IMR-90 (cell line): ENCODE measurements at regions of chr4 and their contacts with region 1.

Region 1: DNA sequence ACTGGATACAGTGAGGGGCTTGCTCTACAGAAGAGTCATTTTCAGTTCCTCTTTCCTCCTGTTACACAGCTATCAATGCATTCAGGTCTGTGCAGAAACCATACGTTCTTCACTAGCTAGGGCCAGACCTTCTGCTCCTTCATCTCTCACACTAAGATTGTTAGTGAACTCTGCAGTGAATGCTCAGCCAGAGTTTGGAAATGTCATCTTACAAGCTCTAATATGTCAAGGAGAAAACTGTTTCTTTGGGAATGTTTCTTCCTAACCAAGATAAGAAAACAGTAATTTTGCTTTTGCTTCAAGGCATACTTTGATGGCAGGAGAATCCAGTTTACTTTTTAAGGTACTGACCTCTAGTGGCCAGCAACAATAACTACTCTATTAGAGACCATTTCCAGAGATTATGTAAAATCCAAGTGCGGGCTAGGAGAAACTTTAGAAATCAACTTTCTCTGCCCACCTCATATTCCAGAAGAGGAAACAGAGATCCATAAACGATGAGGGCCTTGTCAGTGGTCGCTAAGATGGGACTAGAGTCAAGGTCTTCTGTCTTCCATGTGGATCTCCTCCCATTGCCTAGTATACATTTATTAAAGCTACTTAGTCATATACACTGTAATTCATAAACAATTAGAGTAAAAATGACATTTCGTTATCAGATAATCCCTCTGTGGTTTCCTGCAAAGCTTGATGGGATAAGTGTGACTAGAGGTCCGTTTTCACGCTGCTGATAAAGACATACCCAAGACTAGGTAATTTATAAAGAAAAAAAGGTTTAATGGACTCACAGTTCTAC is 12.1 kb upstream of the CC2D2A start:
- DNase-seq: peak; percentile 81
- ATAC-seq: peak; percentile 88
- H3K4me3 ChIP-seq: no peak overlapping the region
- H3K27ac ChIP-seq: peak overlapping the region; percentile 85; the same call in 1 of the 2 replicates
- H3K4me1 ChIP-seq: peaks cover 23% of the 10 kb centered on the region
- H3K27me3 ChIP-seq: peaks cover 4% of the 10 kb centered on the region
- CTCF ChIP-seq: peak; percentile 83
- POLR2A ChIP-seq: no peak
- RAD21 ChIP-seq: peak; percentile 84

Region 2: DNA sequence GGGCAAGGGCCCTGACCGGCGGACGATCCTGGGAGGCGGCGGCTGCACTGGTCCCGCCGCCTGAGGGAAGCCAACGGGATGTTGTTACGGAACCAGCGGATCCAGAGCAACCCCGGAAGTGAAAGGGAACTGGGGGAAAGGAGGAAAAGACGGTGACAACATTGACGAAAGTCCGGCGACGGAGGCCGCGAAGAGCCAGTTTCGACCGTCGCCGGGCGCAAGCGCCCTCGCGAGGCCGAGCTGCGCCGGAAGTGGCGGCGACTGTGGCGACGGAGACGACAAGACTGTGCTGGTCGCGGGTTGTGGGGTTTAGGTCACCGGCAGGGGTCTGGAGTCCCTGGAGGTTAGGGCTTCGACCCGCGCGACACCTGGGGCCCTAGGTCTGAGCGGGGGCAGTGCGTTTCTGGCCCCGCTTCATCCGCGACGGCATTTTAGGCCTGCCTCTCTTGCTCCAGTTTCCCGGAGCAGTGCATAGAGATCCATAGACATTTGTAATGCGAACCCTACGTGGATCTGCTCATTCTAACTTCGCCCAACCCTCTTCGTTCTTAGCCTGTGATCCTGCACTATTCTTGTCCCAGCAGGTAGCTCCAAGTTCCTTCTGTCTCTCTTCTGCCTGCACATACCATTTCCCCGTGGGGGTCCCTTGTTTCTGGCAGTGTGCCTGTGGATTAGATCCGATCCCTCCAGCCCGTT is 1829.8 kb before region 1 on chr4 and contains the start of gene BOD1L1:
- CTCF ChIA-PET with region 1: no interaction called
- POLR2A ChIA-PET with region 1: no interaction called
- dilution Hi-C with region 1: no loop called
- in situ Hi-C with region 1: loop called (anchors 25 kb)
- intact Hi-C with region 1: no loop called
- DNase-seq: peak; percentile 89
- ATAC-seq: peak; percentile 94
- H3K4me3 ChIP-seq: peak within 1 kb of the TSS; percentile 94
- H3K27ac ChIP-seq: peak within 1 kb of the TSS; percentile 90
- H3K4me1 ChIP-seq: peaks cover 5% of the 10 kb centered on the region
- H3K27me3 ChIP-seq: no peaks in the 10 kb centered on the region
- CTCF ChIP-seq: peak; percentile 53
- POLR2A ChIP-seq: peak; percentile 89
- RAD21 ChIP-seq: peak; percentile 6; the same call in 1 of the 2 replicates
- total RNA-seq, gene BOD1L1: 26.9 and 34.4 TPM in 2 replicates

Region 3: DNA sequence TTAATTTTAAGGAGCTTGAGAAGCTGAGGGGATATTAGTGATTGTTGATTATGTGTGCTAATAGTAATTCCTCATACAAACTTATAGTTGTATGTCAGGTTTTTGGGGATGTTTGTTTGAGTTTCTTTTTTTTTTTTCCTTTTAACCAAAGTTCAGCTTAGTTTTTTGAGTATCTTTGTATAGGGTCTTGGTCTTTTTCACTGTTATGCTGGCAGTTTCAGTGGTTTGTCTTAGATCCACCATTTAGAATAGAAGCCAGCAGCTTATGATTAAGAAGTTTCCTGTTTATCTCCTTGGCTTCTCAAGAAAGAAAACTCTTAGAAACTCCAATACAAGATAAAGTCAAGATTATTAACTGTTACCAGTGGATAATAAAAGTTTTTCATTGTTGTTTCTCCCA is 439.2 kb before region 1 on chr4:
- CTCF ChIA-PET with region 1: no interaction called
- POLR2A ChIA-PET with region 1: no interaction called
- dilution Hi-C with region 1: no loop called
- in situ Hi-C with region 1: no loop called
- intact Hi-C with region 1: loop called (anchors 5 kb)
- DNase-seq: no peak
- ATAC-seq: no peak
- H3K4me3 ChIP-seq: no peak overlapping the region
- H3K27ac ChIP-seq: no peak overlapping the region
- H3K4me1 ChIP-seq: peaks cover 2% of the 10 kb centered on the region
- H3K27me3 ChIP-seq: no peaks in the 10 kb centered on the region
- CTCF ChIP-seq: no peak
- POLR2A ChIP-seq: no peak
- RAD21 ChIP-seq: no peak

Region 4: GRCh38 chr4:15238720-15239119 is 218.9 kb before region 1 on chr4:
- CTCF ChIA-PET with region 1: interaction called, 14 read pairs
- POLR2A ChIA-PET with region 1: no interaction called
- dilution Hi-C with region 1: no loop called
- in situ Hi-C with region 1: loop called (anchors 5 kb)
- intact Hi-C with region 1: loop called (anchors 1 kb)
- DNase-seq: peak; percentile 63
- ATAC-seq: peak; percentile 62
- H3K4me3 ChIP-seq: no peak overlapping the region
- H3K27ac ChIP-seq: no peak overlapping the region
- H3K4me1 ChIP-seq: peaks cover 15% of the 10 kb centered on the region
- H3K27me3 ChIP-seq: no peaks in the 10 kb centered on the region
- CTCF ChIP-seq: peak; percentile 89
- POLR2A ChIP-seq: no peak
- RAD21 ChIP-seq: peak; percentile 93

Region 5: DNA sequence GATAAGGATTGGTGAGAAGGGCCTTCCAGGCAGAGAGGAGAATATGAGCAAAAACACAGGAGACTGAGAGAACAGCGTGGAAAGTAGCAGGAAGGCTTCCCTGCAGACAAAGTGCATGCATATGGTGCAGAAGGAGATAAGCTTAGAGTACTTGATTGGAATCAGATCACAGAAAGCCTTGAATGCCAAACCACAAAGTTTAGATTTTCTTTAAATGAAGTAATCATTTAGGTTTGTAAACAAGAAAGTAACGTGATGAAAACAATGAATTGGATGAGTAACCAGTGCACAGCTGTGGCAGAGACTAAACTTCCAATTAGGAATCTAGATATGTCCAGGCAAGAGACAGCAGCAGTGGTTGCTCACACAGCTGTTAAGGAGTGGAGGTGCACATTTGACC is 113.6 kb before region 1 on chr4:
- CTCF ChIA-PET with region 1: no interaction called
- POLR2A ChIA-PET with region 1: no interaction called
- dilution Hi-C with region 1: no loop called
- in situ Hi-C with region 1: loop called (anchors 10 kb)
- intact Hi-C with region 1: loop called (anchors 2 kb)
- DNase-seq: peak; percentile 96
- ATAC-seq: peak; percentile 80
- H3K4me3 ChIP-seq: no peak overlapping the region
- H3K27ac ChIP-seq: peak overlapping the region; percentile 33; the same call in 1 of the 2 replicates
- H3K4me1 ChIP-seq: peaks cover 9% of the 10 kb centered on the region
- H3K27me3 ChIP-seq: peaks cover 10% of the 10 kb centered on the region
- CTCF ChIP-seq: no peak
- POLR2A ChIP-seq: no peak
- RAD21 ChIP-seq: no peak

Region 6: GRCh38 chr4:15402146-15402545 is 55.5 kb before region 1 on chr4:
- CTCF ChIA-PET with region 1: interaction called, 14 read pairs
- POLR2A ChIA-PET with region 1: interaction called, 3 read pairs
- dilution Hi-C with region 1: no loop called
- in situ Hi-C with region 1: no loop called
- intact Hi-C with region 1: loop called (anchors 1 kb)
- DNase-seq: peak; percentile 80
- ATAC-seq: peak; percentile 76
- H3K4me3 ChIP-seq: no peak overlapping the region
- H3K27ac ChIP-seq: peak overlapping the region; percentile 98; the same call in 1 of the 2 replicates
- H3K4me1 ChIP-seq: peaks cover 19% of the 10 kb centered on the region
- H3K27me3 ChIP-seq: no peaks in the 10 kb centered on the region
- CTCF ChIP-seq: no peak
- POLR2A ChIP-seq: no peak
- RAD21 ChIP-seq: no peak